B cell (primary cell): ENCODE measurements at regions of chr6 and their contacts with region 1.

Region 1: GRCh38 chr6:131199568-131200272 is 64.5 kb downstream of the AKAP7 start:
- DNase-seq: peak; percentile 88
- ATAC-seq: peak; percentile 99
- H3K4me3 ChIP-seq: peak overlapping the region; percentile 25 to 51 (median 40)
- H3K4me3 Mint-ChIP-seq: peak overlapping the region; percentile 72
- H3K27ac ChIP-seq: peak overlapping the region; percentile 80 to 92
- H3K27ac Mint-ChIP-seq: peak overlapping the region; percentile 90
- H3K4me1 ChIP-seq: peaks cover 28 to 41% of the 10 kb centered on the region in 2 donors
- H3K4me1 Mint-ChIP-seq: peaks cover 36% of the 10 kb centered on the region
- H3K27me3 ChIP-seq: no peaks in the 10 kb centered on the region
- H3K27me3 Mint-ChIP-seq: no peaks in the 10 kb centered on the region
- CTCF ChIP-seq: peak; percentile 79

Region 2: DNA sequence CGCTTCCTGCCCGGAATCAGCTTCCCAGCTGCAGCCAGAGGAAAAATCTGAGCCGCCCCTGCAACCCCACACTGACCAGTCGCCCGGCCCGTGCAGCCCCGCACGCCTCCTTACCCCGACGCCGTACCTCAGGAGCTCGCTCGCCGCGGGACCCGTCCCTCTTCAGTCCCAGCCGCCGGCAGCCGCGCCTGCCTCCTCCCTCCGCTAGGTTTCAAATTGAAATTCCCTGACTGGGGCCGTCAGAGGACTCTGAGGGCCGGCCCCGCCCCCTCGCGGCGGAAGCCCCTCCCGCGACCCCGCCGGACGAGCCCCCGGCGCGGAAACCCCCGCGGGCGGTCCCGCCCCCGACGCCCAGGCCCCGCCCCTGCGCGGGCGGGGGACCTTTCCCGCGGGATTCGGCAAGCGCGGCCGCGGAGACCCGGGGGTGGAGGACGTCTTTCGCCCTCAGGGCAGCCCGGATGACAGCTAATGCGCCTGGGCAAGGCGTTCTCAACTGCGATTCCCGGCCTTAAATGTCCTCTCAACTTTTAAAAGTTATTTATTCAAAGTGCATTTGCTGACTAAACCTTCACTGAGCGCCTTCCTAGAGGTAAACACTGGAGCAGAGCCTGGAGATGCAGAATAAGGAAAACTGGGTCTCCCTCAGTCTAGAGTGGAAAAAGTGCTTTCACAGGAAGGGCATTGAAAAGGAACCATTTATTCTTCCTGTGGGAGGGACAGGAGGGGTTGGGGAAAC is 136.5 kb before region 1 on chr6 and contains the start of gene EPB41L2:
- CTCF ChIA-PET with region 1: no interaction called
- POLR2A ChIA-PET with region 1: no interaction called
- intact Hi-C with region 1: loop called (anchors 5 kb)
- DNase-seq: peak; percentile 93
- ATAC-seq: peak; percentile 89
- H3K4me3 ChIP-seq: peak within 1 kb of the TSS; percentile 73 to 94 (median 90)
- H3K4me3 Mint-ChIP-seq: peak within 1 kb of the TSS; percentile 92
- H3K27ac ChIP-seq: peak within 1 kb of the TSS; percentile 72 to 78
- H3K27ac Mint-ChIP-seq: peak within 1 kb of the TSS; percentile 81
- H3K4me1 ChIP-seq: peaks cover 27 to 32% of the 10 kb centered on the region in 2 donors
- H3K4me1 Mint-ChIP-seq: peaks cover 33% of the 10 kb centered on the region
- H3K27me3 ChIP-seq: no peaks in the 10 kb centered on the region
- H3K27me3 Mint-ChIP-seq: no peaks in the 10 kb centered on the region
- CTCF ChIP-seq: peak; percentile 31
- total RNA-seq, gene EPB41L2: 59.8 and 61.0 TPM in 2 replicates

Region 3: GRCh38 chr6:131135244-131136020 is 64.3 kb before region 1 on chr6 and contains the start of gene AKAP7:
- CTCF ChIA-PET with region 1: interaction called, 3 read pairs
- POLR2A ChIA-PET with region 1: no interaction called
- intact Hi-C with region 1: loop called (anchors 2 kb)
- DNase-seq: peak; percentile 78
- ATAC-seq: peak; percentile 77
- H3K4me3 ChIP-seq: peak within 1 kb of the TSS; percentile 55 to 82 (median 76)
- H3K4me3 Mint-ChIP-seq: peak within 1 kb of the TSS; percentile 95
- H3K27ac ChIP-seq: peak within 1 kb of the TSS; percentile 66 to 78
- H3K27ac Mint-ChIP-seq: peak within 1 kb of the TSS; percentile 93
- H3K4me1 ChIP-seq: peaks cover 9 to 13% of the 10 kb centered on the region in 2 donors
- H3K4me1 Mint-ChIP-seq: peaks cover 23% of the 10 kb centered on the region
- H3K27me3 ChIP-seq: no peaks in the 10 kb centered on the region
- H3K27me3 Mint-ChIP-seq: no peaks in the 10 kb centered on the region
- CTCF ChIP-seq: no peak
- total RNA-seq, gene AKAP7: 8.3 and 10.8 TPM in 2 replicates

Region 4: GRCh38 chr6:131182991-131183425 is 16.7 kb before region 1 on chr6:
- CTCF ChIA-PET with region 1: interaction called, 14 read pairs
- POLR2A ChIA-PET with region 1: no interaction called
- intact Hi-C with region 1: no loop called
- DNase-seq: peak; percentile 56
- ATAC-seq: peak; percentile 36
- H3K4me3 ChIP-seq: peak overlapping the region in 2 of 5 experiments; percentile 28 to 41
- H3K4me3 Mint-ChIP-seq: peak overlapping the region; percentile 33
- H3K27ac ChIP-seq: no peak overlapping the region
- H3K27ac Mint-ChIP-seq: peak overlapping the region; percentile 71
- H3K4me1 ChIP-seq: peaks cover 4 to 5% of the 10 kb centered on the region in 2 donors
- H3K4me1 Mint-ChIP-seq: peaks cover 5% of the 10 kb centered on the region
- H3K27me3 ChIP-seq: no peaks in the 10 kb centered on the region
- H3K27me3 Mint-ChIP-seq: no peaks in the 10 kb centered on the region
- CTCF ChIP-seq: peak; percentile 52

Region 5: GRCh38 chr6:131532580-131533039 is 332.9 kb after region 1 on chr6:
- CTCF ChIA-PET with region 1: interaction called, 86 read pairs
- POLR2A ChIA-PET with region 1: no interaction called
- intact Hi-C with region 1: loop called (anchors 1 kb)
- DNase-seq: no peak
- ATAC-seq: no peak
- H3K4me3 ChIP-seq: no peak overlapping the region
- H3K4me3 Mint-ChIP-seq: no peak overlapping the region
- H3K27ac ChIP-seq: no peak overlapping the region
- H3K27ac Mint-ChIP-seq: no peak overlapping the region
- H3K4me1 ChIP-seq: peaks cover 3% of the 10 kb centered on the region in 2 donors
- H3K4me1 Mint-ChIP-seq: peaks cover 5% of the 10 kb centered on the region
- H3K27me3 ChIP-seq: peaks cover 0 to 4% (median 0%) of the 10 kb centered on the region in 4 experiments
- H3K27me3 Mint-ChIP-seq: peaks cover 11% of the 10 kb centered on the region
- CTCF ChIP-seq: no peak

Region 6: GRCh38 chr6:131597446-131597845 is 397.7 kb after region 1 on chr6:
- CTCF ChIA-PET with region 1: interaction called, 7 read pairs
- POLR2A ChIA-PET with region 1: no interaction called
- intact Hi-C with region 1: loop called (anchors 1 kb)
- DNase-seq: peak; percentile 13
- ATAC-seq: no peak
- H3K4me3 ChIP-seq: no peak overlapping the region
- H3K4me3 Mint-ChIP-seq: no peak overlapping the region
- H3K27ac ChIP-seq: no peak overlapping the region
- H3K27ac Mint-ChIP-seq: no peak overlapping the region
- H3K4me1 ChIP-seq: no peaks in the 10 kb centered on the region
- H3K4me1 Mint-ChIP-seq: no peaks in the 10 kb centered on the region
- H3K27me3 ChIP-seq: no peaks in the 10 kb centered on the region
- H3K27me3 Mint-ChIP-seq: no peaks in the 10 kb centered on the region
- CTCF ChIP-seq: peak; percentile 21

Region 7: DNA sequence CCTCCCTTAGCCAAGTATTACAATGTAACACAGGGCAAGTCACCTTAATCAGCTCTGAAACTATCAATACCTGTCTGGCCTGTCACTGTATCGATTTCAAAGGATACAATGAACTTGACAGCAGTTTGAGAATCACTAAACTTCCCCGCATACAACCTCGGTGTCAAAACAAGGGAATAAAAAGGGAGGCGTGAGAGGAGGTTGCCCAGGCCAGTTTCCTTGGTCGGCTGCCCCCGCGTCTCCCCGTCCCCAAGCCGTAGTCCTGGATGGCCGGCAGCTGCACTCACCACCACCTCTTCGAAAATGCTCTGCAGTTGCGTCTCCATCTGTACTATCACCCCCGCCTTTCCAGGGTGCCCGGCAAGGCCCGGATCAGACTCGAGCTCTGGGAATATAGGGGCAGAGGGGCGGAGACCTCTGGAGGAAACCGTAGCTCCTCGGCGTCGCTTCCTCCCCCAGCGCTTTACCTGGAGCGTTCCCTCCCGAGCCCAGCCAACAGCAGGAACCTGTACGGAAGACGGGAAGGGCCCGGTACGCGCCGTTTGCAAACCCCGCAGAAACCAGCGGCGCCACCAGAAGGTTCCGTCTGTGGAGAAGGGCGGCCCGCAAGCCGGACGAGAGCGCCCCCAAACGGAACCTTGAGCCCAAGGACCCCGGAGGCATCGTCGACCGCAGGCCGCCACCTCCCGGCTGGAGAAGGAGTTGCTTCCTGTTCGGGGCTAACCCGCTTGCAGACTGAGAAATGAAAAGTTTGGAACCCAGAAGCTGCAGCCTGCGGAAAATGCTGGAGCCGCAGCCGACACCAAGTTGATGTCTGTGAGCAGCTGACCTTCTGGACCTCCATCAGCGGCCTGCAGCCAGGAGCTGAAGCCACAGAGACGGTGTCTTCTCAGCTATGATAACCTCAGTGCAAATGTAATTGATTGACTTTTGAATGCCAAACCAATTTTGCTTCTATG is 428.3 kb after region 1 on chr6 and contains the start of gene MED23:
- CTCF ChIA-PET with region 1: interaction called, 11 read pairs
- POLR2A ChIA-PET with region 1: interaction called, 3 read pairs
- intact Hi-C with region 1: loop called (anchors 1 kb)
- DNase-seq: peak; percentile 97
- ATAC-seq: peak; percentile 97
- H3K4me3 ChIP-seq: peak within 1 kb of the TSS; percentile 82 to 95 (median 87)
- H3K4me3 Mint-ChIP-seq: peak within 1 kb of the TSS; percentile 98
- H3K27ac ChIP-seq: peak within 1 kb of the TSS; percentile 58 to 71
- H3K27ac Mint-ChIP-seq: peak within 1 kb of the TSS; percentile 94
- H3K4me1 ChIP-seq: peaks cover 9 to 11% of the 10 kb centered on the region in 2 donors
- H3K4me1 Mint-ChIP-seq: peaks cover 25% of the 10 kb centered on the region
- H3K27me3 ChIP-seq: no peaks in the 10 kb centered on the region
- H3K27me3 Mint-ChIP-seq: peaks cover under 1% of the 10 kb centered on the region
- CTCF ChIP-seq: peak; percentile 97
- total RNA-seq, gene MED23: 55.4 and 57.1 TPM in 2 replicates

Region 8: GRCh38 chr6:132236744-132237143 is 1037.0 kb after region 1 on chr6:
- CTCF ChIA-PET with region 1: no interaction called
- POLR2A ChIA-PET with region 1: no interaction called
- intact Hi-C with region 1: no loop called
- DNase-seq: no peak
- ATAC-seq: no peak
- H3K4me3 ChIP-seq: no peak overlapping the region
- H3K4me3 Mint-ChIP-seq: no peak overlapping the region
- H3K27ac ChIP-seq: no peak overlapping the region
- H3K27ac Mint-ChIP-seq: no peak overlapping the region
- H3K4me1 ChIP-seq: no peaks in the 10 kb centered on the region
- H3K4me1 Mint-ChIP-seq: peaks cover 5% of the 10 kb centered on the region
- H3K27me3 ChIP-seq: peaks cover 0 to 3% (median 1%) of the 10 kb centered on the region in 4 experiments
- H3K27me3 Mint-ChIP-seq: peaks cover 8% of the 10 kb centered on the region
- CTCF ChIP-seq: no peak